ENCODE measurements at regions of chr9 and their contacts with region 1.

Region 1: DNA sequence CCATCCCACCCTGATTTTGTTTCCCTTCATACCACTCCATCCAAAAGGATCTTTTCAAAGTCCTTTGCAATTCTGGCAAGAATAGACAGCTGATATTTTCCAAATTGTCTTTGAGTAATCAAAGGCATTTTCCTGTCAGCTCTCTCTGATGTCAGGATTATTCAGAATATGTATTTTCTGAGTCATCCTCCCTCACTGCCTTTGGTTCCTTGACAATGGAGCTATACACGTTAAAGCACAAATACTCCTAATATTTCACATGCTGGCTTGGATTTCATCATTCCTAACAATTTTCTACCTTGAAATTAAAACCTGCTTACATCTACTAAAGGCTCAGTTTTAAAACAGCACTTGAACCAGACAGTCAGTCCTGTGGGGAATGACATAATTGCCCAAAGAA is 379.4 kb downstream of the GADD45G start:
- DNase-seq: no peak
- H3K4me3 Mint-ChIP-seq: peak overlapping the region; percentile 75
- H3K27ac Mint-ChIP-seq: peak overlapping the region; percentile 90
- H3K4me1 Mint-ChIP-seq: peaks cover 50% of the 10 kb centered on the region
- H3K27me3 Mint-ChIP-seq: peaks cover 11% of the 10 kb centered on the region

Region 2: DNA sequence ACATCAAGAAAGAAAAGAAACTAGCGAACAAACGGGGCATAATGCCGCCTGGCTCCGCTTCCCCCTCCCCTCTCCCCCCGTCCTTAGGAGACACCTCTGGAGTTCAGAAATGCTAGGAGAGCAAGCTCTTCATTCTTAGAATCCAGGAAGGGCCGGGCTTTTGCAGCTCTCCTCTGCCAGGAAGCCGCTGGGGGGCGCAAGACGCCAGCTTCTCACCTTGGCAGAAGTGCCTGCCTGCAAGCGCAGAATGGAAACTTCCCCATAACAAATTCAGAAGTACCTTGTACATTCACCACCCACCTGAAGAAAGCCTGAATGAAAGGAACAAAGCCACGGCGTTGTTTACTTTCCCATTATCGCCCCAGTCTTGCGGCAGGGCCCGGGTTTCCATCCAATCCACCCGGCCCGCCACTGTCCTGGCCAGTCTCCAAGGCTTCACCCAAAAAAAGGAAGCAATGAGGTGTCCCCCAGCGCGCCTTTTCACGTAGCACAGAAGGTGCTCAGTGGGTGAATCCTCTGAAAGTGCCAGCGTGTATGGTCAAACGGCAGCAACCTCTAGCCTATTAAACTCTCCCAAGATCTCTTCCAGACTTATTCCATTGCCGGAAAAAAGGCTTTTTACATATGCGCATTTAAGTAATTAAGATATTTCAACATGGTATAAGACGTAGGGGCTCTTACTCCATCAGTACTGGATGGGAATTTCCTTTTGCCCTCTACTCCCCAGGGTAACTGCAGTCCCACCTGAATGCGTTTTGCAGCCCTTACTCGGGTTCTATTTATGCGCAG is 381.0 kb before region 1 on chr9:
- intact Hi-C with region 1: loop called (anchors 1 kb)
- DNase-seq: peak; percentile 97
- H3K4me3 Mint-ChIP-seq: peak overlapping the region; percentile 92
- H3K27ac Mint-ChIP-seq: peak overlapping the region; percentile 89
- H3K4me1 Mint-ChIP-seq: peaks cover 32% of the 10 kb centered on the region
- H3K27me3 Mint-ChIP-seq: peaks cover 17% of the 10 kb centered on the region

Region 3: DNA sequence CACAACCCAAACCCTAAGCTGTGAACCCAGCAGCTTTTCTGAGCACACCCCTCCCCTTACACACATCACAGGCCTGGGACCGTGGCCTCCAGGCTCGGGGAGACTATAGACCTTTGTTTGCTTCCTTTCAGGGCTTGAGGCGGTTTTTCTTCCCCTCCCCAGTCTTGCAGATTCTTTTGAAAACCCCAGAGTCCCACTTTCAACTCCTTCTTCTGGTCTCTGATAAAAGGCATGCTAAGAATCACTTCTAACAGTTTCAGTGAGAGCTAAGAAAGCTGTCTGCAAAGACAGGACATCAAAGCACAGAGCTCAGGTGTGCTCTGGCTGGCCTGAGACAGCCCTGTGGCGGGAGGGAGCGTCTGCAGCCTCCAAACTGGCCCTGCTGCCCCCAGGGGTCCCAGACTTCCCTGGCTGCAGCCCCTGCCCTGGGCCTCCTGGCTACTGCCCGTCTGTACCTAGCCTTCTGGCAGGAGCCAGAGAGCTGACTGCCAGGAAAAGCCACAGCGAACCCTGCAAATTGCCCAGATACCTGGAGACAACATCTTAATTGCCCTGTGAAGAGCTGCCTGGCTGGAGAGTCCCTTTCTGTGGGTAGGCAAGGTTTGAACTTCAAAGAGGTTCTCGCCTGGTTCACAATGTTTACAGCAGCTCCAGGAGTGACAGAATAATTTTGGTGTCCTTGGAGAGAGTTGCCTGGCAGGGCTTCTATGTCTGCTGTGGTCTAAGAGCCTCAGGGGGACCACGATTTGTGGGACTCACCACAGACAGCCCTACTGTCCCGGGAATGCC is 240.4 kb before region 1 on chr9:
- intact Hi-C with region 1: loop called (anchors 10 kb)
- DNase-seq: peak; percentile 94
- H3K4me3 Mint-ChIP-seq: peak overlapping the region; percentile 67
- H3K27ac Mint-ChIP-seq: peak overlapping the region; percentile 87
- H3K4me1 Mint-ChIP-seq: peaks cover 80% of the 10 kb centered on the region
- H3K27me3 Mint-ChIP-seq: no peaks in the 10 kb centered on the region

Region 4: DNA sequence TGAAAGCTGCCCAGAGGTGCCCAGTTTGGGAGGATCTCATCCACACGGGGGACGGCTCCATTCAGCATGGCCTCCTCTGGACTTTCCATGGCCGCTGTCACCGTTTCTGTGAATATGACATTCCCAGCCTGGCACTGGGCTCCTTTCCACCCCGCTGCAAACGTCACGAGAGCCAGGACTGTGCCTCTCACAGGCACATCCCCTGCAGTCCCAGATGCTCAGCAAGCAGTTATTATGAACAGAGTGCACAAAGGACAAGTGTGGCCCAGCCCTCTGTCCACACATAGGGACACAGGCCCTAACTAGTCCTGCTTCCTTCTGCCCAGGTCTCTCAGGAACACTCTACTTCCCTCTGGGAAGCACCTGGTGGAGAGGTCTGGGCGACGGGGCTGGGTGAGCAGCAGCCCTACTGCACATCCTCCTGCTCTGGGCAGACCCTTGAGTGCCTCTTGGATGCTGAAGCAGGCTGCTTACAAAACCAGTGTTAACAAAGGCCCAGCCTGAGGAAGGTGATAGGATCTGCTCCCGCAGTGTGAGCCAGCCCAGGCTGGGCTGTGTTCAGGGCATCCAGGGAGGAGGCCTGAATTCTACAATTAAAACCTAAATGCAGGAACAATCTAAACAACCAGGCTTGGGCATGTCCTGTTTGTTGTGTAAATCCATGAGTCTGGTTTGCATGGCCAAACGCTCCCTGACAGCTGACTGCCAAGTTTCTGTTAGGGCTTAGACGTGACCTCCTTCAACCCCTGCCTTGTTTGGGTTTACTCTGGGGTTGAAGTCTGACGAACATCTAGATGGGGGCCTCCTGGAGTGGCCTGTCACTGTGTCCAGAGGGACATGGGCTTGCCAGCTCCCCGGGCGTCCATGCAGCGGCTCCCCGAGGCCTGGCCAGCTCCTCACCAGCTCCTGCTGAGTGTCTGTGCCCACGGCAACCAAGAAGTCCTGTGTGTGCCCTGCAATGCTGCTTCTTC is 109.6 kb before region 1 on chr9:
- intact Hi-C with region 1: no loop called
- DNase-seq: no peak
- H3K4me3 Mint-ChIP-seq: no peak overlapping the region
- H3K27ac Mint-ChIP-seq: no peak overlapping the region
- H3K4me1 Mint-ChIP-seq: no peaks in the 10 kb centered on the region
- H3K27me3 Mint-ChIP-seq: no peaks in the 10 kb centered on the region

Region 5: DNA sequence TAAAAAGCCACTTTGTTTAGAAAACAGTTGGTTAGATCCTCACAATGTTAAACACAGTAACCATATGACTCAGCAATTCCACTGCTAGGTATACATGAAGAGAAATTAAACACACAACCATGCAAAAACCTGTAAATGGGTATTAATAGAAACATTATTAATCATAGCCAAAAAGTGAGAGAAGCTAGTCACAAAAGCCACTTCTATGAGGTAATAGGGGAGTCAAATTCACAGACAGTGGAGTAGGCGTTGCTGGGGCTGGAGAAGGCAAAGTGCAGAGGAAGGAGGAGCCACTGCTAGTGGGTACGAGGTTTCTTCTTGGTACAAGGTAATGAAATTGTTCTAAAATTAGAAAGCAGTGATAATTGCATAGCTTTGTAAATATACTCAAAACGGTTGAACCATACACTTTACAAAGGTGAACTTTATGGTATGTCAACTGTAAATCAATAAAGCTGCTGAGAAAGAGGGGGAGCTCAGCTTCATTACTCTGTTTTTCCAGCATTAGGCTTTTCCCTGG is 15.0 kb before region 1 on chr9:
- intact Hi-C with region 1: loop called (anchors 1 kb)
- DNase-seq: no peak
- H3K4me3 Mint-ChIP-seq: peak overlapping the region; percentile 18
- H3K27ac Mint-ChIP-seq: peak overlapping the region; percentile 63
- H3K4me1 Mint-ChIP-seq: peaks cover 37% of the 10 kb centered on the region
- H3K27me3 Mint-ChIP-seq: peaks cover 3% of the 10 kb centered on the region

Region 6: DNA sequence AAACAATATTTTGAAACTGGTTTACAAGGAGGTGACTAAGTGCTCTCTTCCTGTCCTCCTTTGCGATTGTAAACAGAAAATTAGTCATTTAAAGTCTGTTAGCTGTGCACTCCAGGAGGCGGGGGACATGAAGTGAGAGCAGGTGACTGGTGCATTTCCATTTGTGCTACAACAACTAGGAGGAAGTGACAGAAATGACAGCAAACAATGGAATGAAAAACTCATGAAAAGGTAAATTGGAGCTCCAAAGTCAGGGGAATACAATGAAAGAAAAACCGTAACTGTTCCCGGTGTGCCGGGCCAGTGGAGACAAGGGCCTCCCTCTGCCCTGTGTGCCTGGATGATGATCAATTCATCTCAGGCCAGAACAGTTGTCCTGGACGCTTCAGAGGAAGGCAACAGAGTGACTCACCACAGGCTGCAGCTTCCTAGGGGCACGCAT is 60.5 kb after region 1 on chr9:
- intact Hi-C with region 1: loop called (anchors 1 kb)
- DNase-seq: peak; percentile 66
- H3K4me3 Mint-ChIP-seq: no peak overlapping the region
- H3K27ac Mint-ChIP-seq: peak overlapping the region; percentile 52
- H3K4me1 Mint-ChIP-seq: peaks cover 31% of the 10 kb centered on the region
- H3K27me3 Mint-ChIP-seq: peaks cover 3% of the 10 kb centered on the region

Measured in activated CD4-positive, alpha-beta T cell treated with anti-CD3 and anti-CD28 coated beads, Interleukin-2, amount 10 ng/mL, durations not matched to agents 24 days and 14 days (primary cell).